ENCODE measurements at regions of chr20 and their contacts with region 1.

Region 1: GRCh38 chr20:4837760-4838159 is 116.1 kb downstream of the PRND start:
- DNase-seq: no peak
- H3K4me3 ChIP-seq: no peak overlapping the region
- H3K27ac ChIP-seq: no peak overlapping the region
- H3K4me1 ChIP-seq: no peaks in the 10 kb centered on the region
- H3K27me3 ChIP-seq: peaks cover 11 to 18% of the 10 kb centered on the region in 2 experiments
- CTCF ChIP-seq: no peak
- POLR2A ChIP-seq: no peak

Region 2: GRCh38 chr20:4341804-4342485 is 495.8 kb before region 1 on chr20:
- CTCF ChIA-PET with region 1: no interaction called
- POLR2A ChIA-PET with region 1: no interaction called
- dilution Hi-C with region 1: no loop called
- intact Hi-C with region 1: no loop called
- DNase-seq: no peak
- H3K4me3 ChIP-seq: no peak overlapping the region
- H3K27ac ChIP-seq: no peak overlapping the region
- H3K4me1 ChIP-seq: no peaks in the 10 kb centered on the region
- H3K27me3 ChIP-seq: peaks cover 7 to 23% of the 10 kb centered on the region in 2 experiments
- CTCF ChIP-seq: no peak
- POLR2A ChIP-seq: no peak

Region 3: DNA sequence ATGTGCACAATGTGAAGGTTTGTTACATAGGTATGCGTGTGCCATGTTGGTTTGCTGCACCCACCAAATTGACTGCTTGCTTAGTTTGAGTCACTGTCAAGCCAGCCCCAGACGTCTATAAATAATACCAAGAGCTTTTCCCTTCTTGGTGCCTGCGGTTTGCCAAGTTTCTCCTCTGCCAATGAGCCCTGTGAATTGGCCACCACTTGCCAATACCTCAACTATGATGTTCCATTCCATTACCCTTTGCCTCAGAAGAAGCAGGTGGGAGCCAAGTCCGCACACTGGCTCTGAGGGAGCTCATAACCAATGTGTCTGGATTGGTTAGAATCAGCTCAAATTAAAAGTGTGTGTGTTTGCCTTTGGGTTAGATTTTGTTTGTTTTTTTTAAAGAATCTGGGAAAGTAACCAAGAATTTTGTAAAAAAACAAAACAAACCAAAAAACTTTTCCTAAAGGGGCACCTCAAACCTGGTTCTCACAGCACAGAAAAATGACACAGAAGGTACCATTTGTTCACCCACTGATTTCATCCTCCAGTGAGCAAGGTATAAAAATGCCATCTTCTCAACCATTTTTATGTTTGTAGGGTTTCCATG is 360.8 kb before region 1 on chr20:
- CTCF ChIA-PET with region 1: no interaction called
- POLR2A ChIA-PET with region 1: no interaction called
- dilution Hi-C with region 1: no loop called
- intact Hi-C with region 1: no loop called
- DNase-seq: no peak
- H3K4me3 ChIP-seq: no peak overlapping the region
- H3K27ac ChIP-seq: no peak overlapping the region
- H3K4me1 ChIP-seq: no peaks in the 10 kb centered on the region
- H3K27me3 ChIP-seq: peaks cover 0 to 11% of the 10 kb centered on the region in 2 experiments
- CTCF ChIP-seq: no peak
- POLR2A ChIP-seq: no peak

Region 4: DNA sequence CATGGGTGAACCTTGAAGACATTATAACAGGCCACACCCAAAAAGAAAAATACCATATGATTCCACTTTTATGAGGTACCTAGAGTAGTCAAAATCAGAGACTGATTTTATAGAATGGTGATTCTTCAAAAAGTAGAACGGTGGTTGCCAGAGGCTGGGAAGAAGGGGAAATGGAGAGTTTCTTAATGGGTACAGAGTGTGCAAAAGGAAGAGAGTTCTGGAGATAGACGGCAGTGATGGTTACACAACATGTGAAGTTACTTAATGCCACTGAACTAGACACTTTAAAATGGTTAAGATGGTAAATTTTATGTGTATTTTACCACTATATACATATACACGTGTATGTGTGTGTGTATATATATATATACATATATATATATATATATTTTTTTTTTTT is 35.2 kb before region 1 on chr20:
- CTCF ChIA-PET with region 1: no interaction called
- POLR2A ChIA-PET with region 1: no interaction called
- dilution Hi-C with region 1: no loop called
- intact Hi-C with region 1: no loop called
- DNase-seq: no peak
- H3K4me3 ChIP-seq: no peak overlapping the region
- H3K27ac ChIP-seq: no peak overlapping the region
- H3K4me1 ChIP-seq: no peaks in the 10 kb centered on the region
- H3K27me3 ChIP-seq: no peaks in the 10 kb centered on the region
- CTCF ChIP-seq: no peak
- POLR2A ChIP-seq: no peak

Region 5: DNA sequence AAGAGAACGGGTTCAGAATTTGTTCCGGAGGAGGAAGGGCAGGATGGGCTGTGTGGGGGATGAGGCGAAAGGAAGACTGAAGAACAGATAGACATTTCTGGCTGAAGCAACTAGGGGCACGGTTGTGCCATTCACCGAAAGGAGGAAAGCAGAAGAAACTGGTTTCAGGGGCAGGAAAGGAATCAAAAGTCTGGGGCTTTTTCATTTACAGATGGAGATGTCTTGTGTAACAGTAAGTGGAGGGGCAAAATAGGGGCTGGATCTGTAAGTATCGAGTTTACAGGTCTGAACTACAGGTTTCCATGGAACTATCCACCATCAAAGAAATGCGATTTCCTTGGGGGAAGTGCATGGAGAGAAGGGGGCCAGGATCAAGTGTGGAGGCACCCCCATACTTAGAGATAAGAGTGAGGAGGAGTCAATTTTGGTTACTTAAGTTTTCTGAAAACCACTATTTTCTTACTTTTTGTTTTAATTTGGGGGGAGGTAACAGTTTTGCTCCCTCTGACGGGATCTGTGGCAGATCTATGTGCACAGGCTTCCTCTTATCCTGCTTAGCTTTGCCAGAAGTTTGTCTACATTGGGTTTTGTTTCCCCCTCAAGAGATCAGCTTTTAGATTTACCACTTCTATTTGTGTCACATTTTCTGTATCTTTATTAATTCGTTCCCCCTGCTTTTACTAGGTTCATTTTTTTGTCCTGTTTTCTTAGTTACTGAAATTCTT is 43.4 kb after region 1 on chr20:
- CTCF ChIA-PET with region 1: interaction called, 3 read pairs
- POLR2A ChIA-PET with region 1: no interaction called
- dilution Hi-C with region 1: no loop called
- intact Hi-C with region 1: loop called (anchors 1 kb)
- DNase-seq: no peak
- H3K4me3 ChIP-seq: no peak overlapping the region
- H3K27ac ChIP-seq: no peak overlapping the region
- H3K4me1 ChIP-seq: no peaks in the 10 kb centered on the region
- H3K27me3 ChIP-seq: no peaks in the 10 kb centered on the region
- CTCF ChIP-seq: no peak
- POLR2A ChIP-seq: no peak

Measured in endothelial cell of umbilical vein (primary cell).